T-cell (primary cell): ENCODE measurements at regions of chr11 and their contacts with region 1.

Region 1: GRCh38 chr11:44223238-44223637 is 86.7 kb downstream of the ALX4 start:
- DNase-seq: no peak
- ATAC-seq: no peak
- H3K4me3 ChIP-seq: no peak overlapping the region
- H3K4me3 Mint-ChIP-seq: no peak overlapping the region
- H3K27ac ChIP-seq: no peak overlapping the region
- H3K27ac Mint-ChIP-seq: no peak overlapping the region
- H3K4me1 ChIP-seq: no peaks in the 10 kb centered on the region
- H3K4me1 Mint-ChIP-seq: peaks cover 12 to 24% (median 18%) of the 10 kb centered on the region in 3 donors
- H3K27me3 ChIP-seq: no peaks in the 10 kb centered on the region
- H3K27me3 Mint-ChIP-seq: no peaks in the 10 kb centered on the region

Region 2: GRCh38 chr11:44198146-44198724 is 25.0 kb before region 1 on chr11:
- CTCF ChIA-PET with region 1: interaction called in 1 of 2 experiments, 13 read pairs
- POLR2A ChIA-PET with region 1: no interaction called
- DNase-seq: no peak
- ATAC-seq: no peak
- H3K4me3 ChIP-seq: no peak overlapping the region
- H3K4me3 Mint-ChIP-seq: no peak overlapping the region
- H3K27ac ChIP-seq: no peak overlapping the region
- H3K27ac Mint-ChIP-seq: no peak overlapping the region
- H3K4me1 ChIP-seq: no peaks in the 10 kb centered on the region
- H3K4me1 Mint-ChIP-seq: no peaks in the 10 kb centered on the region
- H3K27me3 ChIP-seq: no peaks in the 10 kb centered on the region
- H3K27me3 Mint-ChIP-seq: no peaks in the 10 kb centered on the region